Activated CD4-positive, alpha-beta memory T cell treated with anti-CD3 and anti-CD28 coated beads for 36 hours (primary cell): ENCODE measurements at regions of chr6 and their contacts with region 1.

Region 1: DNA sequence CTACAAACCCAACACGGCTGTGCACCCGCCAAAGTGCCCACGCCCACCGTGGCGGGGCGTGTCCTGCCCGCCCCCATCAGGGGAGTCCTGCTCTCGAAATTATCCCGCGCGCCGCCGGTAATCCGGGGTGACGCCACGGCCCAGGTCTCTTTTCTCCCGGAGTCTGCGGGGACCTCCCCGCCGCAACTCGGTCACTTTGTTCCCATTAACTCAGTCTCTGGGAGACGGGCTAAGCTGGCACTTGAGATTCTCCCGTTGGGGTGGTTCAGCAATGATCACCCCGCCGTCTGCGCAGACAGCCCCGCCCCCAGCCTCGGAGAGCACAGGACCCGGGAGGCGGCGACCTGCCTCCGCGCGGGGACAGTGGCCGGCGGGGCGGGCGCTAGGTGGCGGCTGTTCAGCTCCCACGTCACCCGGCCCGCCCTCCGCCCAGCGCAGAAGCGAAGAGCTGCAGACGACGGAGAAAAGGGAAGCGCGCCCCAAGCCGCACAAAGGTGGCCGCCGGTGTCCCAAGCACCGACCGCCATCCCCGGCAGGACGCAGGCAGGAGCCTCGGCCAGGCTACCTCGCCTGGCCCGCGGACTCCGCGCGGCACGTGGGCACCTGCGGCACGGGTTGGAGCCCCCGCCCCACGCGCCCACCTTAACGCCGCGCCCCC is 31.5 kb downstream of the SF3B5 start:
- DNase-seq: peak; percentile 91
- H3K4me3 Mint-ChIP-seq: peak overlapping the region; percentile 82
- H3K27ac Mint-ChIP-seq: peak overlapping the region; percentile 67
- H3K4me1 Mint-ChIP-seq: peaks cover 43% of the 10 kb centered on the region
- H3K27me3 Mint-ChIP-seq: no peaks in the 10 kb centered on the region

Region 2: GRCh38 chr6:143569040-143569439 is 494.8 kb before region 1 on chr6:
- CTCF ChIA-PET with region 1: no interaction called
- POLR2A ChIA-PET with region 1: no interaction called
- intact Hi-C with region 1: loop called (anchors 5 kb)
- DNase-seq: peak; percentile 13
- H3K4me3 Mint-ChIP-seq: no peak overlapping the region
- H3K27ac Mint-ChIP-seq: no peak overlapping the region
- H3K4me1 Mint-ChIP-seq: peaks cover 43% of the 10 kb centered on the region
- H3K27me3 Mint-ChIP-seq: no peaks in the 10 kb centered on the region

Region 3: GRCh38 chr6:143842902-143843676 is 220.8 kb before region 1 on chr6 and contains the start of gene LTV1:
- CTCF ChIA-PET with region 1: no interaction called
- POLR2A ChIA-PET with region 1: interaction called, 3 read pairs
- intact Hi-C with region 1: loop called (anchors 2 kb)
- DNase-seq: peak; percentile 96
- H3K4me3 Mint-ChIP-seq: peak within 1 kb of the TSS; percentile 93
- H3K27ac Mint-ChIP-seq: peak within 1 kb of the TSS; percentile 93
- H3K4me1 Mint-ChIP-seq: peaks cover 25% of the 10 kb centered on the region
- H3K27me3 Mint-ChIP-seq: no peaks in the 10 kb centered on the region
- total RNA-seq, gene LTV1: 33.5 to 35.4 TPM

Region 4: GRCh38 chr6:144149891-144150709 is 86.2 kb after region 1 on chr6 and contains the start of gene STX11:
- CTCF ChIA-PET with region 1: interaction called, 3 read pairs
- POLR2A ChIA-PET with region 1: interaction called, 12 read pairs
- intact Hi-C with region 1: loop called (anchors 1 kb)
- DNase-seq: peak; percentile 88
- H3K4me3 Mint-ChIP-seq: peak within 1 kb of the TSS; percentile 88
- H3K27ac Mint-ChIP-seq: peak within 1 kb of the TSS; percentile 98
- H3K4me1 Mint-ChIP-seq: peaks cover 41% of the 10 kb centered on the region
- H3K27me3 Mint-ChIP-seq: no peaks in the 10 kb centered on the region
- total RNA-seq, gene STX11: 16.0 to 16.6 TPM